ENCODE measurements at regions of chr1 and their contacts with region 1.

Region 1: DNA sequence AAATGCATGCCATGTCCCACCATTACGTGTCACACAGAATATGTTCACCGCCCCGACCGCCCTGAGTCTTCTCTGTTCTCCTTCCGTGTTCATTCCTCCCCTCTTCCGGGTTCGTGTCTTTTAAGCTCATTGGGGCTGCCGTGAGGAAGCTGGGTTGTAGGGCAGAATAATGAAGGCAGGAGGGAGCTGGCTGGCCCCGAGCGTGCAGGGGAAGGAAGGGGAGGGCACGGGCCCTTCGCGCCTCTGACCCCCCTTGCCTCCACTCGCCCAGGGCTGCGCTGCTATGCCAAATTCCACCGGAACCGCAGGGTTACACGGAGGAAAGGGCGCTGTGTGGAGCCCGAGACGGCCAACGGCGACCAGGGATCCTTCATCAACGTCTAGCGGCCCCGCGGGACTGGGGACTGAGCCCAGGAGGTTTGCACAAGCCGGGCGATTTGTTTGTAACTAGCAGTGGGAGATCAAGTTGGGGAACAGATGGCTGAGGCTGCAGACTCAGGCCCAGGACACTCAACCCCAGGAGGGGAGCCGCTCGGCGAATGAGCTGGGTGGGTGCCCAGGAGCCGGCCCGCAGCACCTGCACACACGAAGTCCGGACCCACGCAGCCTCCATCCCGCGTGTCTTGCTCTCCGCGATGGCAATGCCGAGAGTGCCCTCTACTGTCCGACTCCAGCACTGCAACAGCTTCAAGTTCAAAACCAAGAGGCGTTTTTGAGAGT is 16.5 kb upstream of the AGTRAP start:
- DNase-seq: peak; percentile 91
- H3K4me3 Mint-ChIP-seq: peak overlapping the region; percentile 73
- H3K27ac Mint-ChIP-seq: peak overlapping the region; percentile 93
- H3K4me1 Mint-ChIP-seq: peaks cover 20% of the 10 kb centered on the region
- H3K27me3 Mint-ChIP-seq: peaks cover 47% of the 10 kb centered on the region

Region 2: DNA sequence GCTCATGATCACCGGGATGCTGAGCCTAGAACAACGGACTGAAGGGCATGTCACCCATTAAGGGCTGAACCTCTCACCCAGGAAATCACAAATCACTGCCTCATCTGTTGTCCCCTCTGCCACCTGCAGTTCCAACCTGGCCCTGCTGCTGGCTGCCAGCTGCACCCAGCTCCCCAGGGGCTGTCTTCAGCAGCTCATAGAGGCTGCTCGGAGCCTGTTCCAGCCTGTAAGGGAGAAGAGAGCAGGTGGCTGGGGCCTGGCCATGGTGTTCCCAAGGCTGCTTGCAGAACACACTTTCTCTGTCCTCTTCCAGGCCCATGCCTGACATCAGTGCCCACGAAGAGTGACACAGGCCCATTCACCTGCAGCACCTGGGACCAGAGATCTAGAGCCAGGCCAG is 285.0 kb before region 1 on chr1:
- CTCF ChIA-PET with region 1: no interaction called
- DNase-seq: no peak
- H3K4me3 Mint-ChIP-seq: no peak overlapping the region
- H3K27ac Mint-ChIP-seq: no peak overlapping the region
- H3K4me1 Mint-ChIP-seq: peaks cover 25% of the 10 kb centered on the region
- H3K27me3 Mint-ChIP-seq: peaks cover 60% of the 10 kb centered on the region

Region 3: GRCh38 chr1:11658308-11658941 is 61.0 kb before region 1 on chr1:
- CTCF ChIA-PET with region 1: interaction called, 79 read pairs
- DNase-seq: no peak
- H3K4me3 Mint-ChIP-seq: no peak overlapping the region
- H3K27ac Mint-ChIP-seq: no peak overlapping the region
- H3K4me1 Mint-ChIP-seq: peaks cover 12% of the 10 kb centered on the region
- H3K27me3 Mint-ChIP-seq: peaks cover 7% of the 10 kb centered on the region

Region 4: DNA sequence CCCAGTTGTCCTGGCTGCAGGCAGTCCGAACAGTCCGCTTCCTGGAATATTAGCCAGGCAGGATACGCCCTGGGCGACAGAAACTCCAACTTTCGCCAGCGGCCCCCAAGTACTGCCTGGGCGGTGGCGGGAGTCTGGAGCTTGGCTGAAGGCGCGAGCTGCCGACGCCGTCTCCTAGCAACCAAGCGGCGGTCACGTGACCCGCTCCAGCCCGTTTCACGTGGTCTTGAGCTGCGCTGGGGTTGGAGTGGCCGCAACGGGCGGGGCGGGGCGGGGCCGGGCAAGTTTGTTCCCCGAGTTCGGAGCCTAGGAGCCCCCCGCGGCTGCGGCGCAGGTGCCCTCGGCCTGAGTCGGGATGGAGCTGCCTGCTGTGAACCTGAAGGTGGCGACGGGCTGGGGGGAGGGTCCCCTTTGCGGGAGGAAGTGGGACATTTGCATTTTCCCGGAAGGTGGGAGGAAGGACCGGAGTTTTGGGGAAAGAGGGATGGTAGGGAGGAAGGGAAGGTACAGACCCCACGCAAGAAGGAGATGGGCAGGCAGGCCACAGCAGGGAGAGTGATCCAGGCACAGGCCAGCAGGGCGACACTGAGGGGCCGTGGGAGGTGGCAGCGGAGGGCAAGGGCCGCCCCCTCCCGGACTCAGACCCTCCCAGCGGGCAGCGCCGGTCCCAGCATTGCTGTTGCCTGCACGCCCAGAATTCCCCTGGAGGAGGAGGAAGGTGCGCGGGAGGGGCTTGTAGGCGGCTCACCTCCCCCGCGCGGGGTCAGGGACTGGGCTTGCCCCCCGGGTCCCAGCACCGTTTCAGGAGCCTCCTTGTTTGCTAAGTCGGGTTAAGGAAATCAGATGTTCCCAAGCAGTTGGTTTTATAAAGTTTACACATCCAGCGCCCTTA is 16.6 kb after region 1 on chr1 and contains the start of gene AGTRAP:
- CTCF ChIA-PET with region 1: interaction called, 12 read pairs
- DNase-seq: peak; percentile 94
- H3K4me3 Mint-ChIP-seq: peak within 1 kb of the TSS; percentile 95
- H3K27ac Mint-ChIP-seq: peak within 1 kb of the TSS; percentile 88
- H3K4me1 Mint-ChIP-seq: peaks cover 78% of the 10 kb centered on the region
- H3K27me3 Mint-ChIP-seq: peaks cover 25% of the 10 kb centered on the region

Region 5: GRCh38 chr1:11761988-11762406 is 42.5 kb after region 1 on chr1 and contains the start of gene C1orf167:
- CTCF ChIA-PET with region 1: no interaction called
- DNase-seq: peak; percentile 59
- H3K4me3 Mint-ChIP-seq: no peak within 1 kb of the TSS
- H3K27ac Mint-ChIP-seq: no peak within 1 kb of the TSS
- H3K4me1 Mint-ChIP-seq: peaks cover 11% of the 10 kb centered on the region
- H3K27me3 Mint-ChIP-seq: peaks cover 64% of the 10 kb centered on the region

Measured in activated naive CD4-positive, alpha-beta T cell treated with anti-CD3 and anti-CD28 coated beads, Interleukin-2, amount 10 ng/mL, durations not matched to agents 7 days and 5 days (primary cell).